ENCODE measurements at regions of chr6 and their contacts with region 1.

Region 1: GRCh38 chr6:150395398-150396009 is 26.7 kb downstream of the IYD start:
- DNase-seq: no peak
- H3K4me3 ChIP-seq: no peak overlapping the region
- H3K27me3 ChIP-seq: 0 out of 2 replicates have a peak, but pooled peaks cover 3% of the 10 kb centered on the region
- CTCF ChIP-seq: peak; percentile 81

Region 2: DNA sequence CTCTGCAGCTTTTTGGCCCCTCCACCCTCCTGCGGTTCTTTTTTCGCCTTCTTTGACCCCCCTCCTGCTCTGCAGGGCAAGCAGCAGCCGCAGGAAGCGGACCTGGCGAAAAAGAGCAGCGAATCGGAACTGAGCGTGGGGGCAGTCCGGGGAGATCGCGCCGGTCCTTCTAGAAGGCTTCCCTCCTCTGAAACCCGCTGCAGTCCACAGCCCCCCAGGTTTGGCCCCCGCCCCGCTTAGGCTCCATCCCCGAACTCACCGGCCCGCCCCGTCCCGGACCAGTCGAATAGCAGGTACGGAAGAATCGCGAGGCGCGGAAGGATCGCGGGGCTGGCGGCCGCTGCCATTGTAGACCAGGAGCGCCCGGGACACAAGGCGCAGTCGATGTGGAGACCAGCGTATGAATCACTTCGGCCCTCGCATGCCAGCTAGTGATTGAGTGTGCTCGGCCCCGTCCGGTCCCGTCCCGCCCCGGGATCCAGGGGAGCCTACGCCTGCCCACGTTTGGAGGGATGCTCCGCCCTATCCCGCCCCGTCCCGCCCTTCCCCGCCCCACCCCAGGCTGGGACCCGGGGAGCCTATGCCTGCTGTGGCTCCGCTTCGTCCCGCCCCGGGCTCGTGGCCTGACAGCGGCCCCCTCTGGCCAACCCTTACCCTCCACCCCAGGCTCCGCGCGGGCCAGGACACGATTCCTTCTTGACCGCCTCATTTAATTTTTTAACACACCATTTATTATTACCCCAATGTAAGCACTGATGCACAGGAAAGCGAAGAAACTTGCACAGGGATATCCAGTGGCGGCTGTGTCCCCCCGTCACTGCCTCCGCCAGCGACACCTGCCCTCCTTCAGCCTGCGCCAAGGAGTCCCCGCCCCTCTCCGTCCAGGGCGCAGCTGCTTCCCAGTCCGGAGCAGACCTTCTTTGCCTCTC is 326.5 kb before region 1 on chr6 and contains the start of gene ULBP3:
- CTCF ChIA-PET with region 1: interaction called, 142 read pairs
- POLR2A ChIA-PET with region 1: no interaction called
- DNase-seq: peak; percentile 71
- H3K4me3 ChIP-seq: peak within 1 kb of the TSS; percentile 55
- H3K27me3 ChIP-seq: no peaks in the 10 kb centered on the region
- CTCF ChIP-seq: peak; percentile 78
- polyA plus RNA-seq, gene ULBP3: 5.6 and 6.0 TPM in 2 replicates

Region 3: GRCh38 chr6:150273457-150274309 is 121.8 kb before region 1 on chr6:
- CTCF ChIA-PET with region 1: no interaction called
- POLR2A ChIA-PET with region 1: no interaction called
- DNase-seq: no peak
- H3K4me3 ChIP-seq: no peak overlapping the region
- H3K27me3 ChIP-seq: no peaks in the 10 kb centered on the region; the same call in none of the 2 replicates
- CTCF ChIP-seq: no peak

Region 4: GRCh38 chr6:150380256-150380655 is 15.2 kb before region 1 on chr6:
- CTCF ChIA-PET with region 1: interaction called, 24 read pairs
- POLR2A ChIA-PET with region 1: no interaction called
- DNase-seq: no peak
- H3K4me3 ChIP-seq: no peak overlapping the region
- H3K27me3 ChIP-seq: no peaks in the 10 kb centered on the region
- CTCF ChIP-seq: no peak

Region 5: GRCh38 chr6:150409576-150410066 is 14.1 kb after region 1 on chr6:
- CTCF ChIA-PET with region 1: interaction called, 15 read pairs
- POLR2A ChIA-PET with region 1: no interaction called
- DNase-seq: no peak
- H3K4me3 ChIP-seq: no peak overlapping the region
- H3K27me3 ChIP-seq: peaks cover 2% of the 10 kb centered on the region; the same call in 1 of the 2 replicates
- CTCF ChIP-seq: no peak

Measured in BJ (cell line).